ENCODE measurements at regions of chr1 and their contacts with region 1.

Region 1: DNA sequence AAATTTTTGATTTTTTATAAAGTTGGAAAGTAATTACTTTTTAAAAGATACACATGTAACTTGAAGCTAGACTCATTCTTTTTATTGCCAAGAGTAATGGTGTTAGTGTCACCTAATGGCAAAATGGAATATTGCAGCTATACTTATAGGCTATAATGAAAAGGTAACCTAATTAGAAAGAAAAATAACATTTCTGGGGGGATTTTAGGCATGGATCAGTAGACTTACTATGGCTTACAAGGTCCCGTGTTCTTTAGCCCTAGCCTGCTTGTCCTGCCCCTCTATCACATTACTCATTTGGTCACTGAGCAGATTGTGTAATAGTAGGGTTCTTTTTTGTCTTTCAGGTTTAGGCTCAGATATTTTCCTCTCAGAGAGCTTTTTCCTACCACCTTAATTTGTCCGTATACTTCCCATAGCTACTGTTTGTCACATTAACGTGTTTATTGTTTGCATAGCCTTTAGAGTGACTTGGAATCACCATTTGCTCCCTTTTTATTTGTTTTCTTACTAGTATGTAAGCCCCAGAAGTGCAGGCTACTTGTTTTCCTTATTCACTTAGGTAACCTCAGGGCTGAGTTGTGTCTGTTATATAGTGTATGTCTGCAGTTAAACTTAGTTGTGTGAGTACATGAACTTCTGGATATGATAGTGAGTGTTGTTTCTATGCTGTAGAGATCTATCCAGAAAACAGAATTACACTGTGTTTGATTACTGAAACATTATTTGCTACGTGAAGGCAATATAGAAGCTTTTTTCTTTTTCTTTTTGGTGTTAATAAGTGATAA is 58.7 kb downstream of the RABGAP1L start:
- DNase-seq: peak; percentile 17
- ATAC-seq: peak; percentile 79; the same call in 1 of the 2 replicates
- H3K4me3 ChIP-seq: no peak overlapping the region
- H3K27ac ChIP-seq: peak overlapping the region; percentile 62; the same call in 1 of the 2 replicates
- H3K4me1 ChIP-seq: peaks cover 13% of the 10 kb centered on the region
- H3K27me3 ChIP-seq: no peaks in the 10 kb centered on the region
- CTCF ChIP-seq: peak; percentile 77; the same call in 1 of the 2 replicates

Region 2: GRCh38 chr1:173970252-173970651 is 247.7 kb before region 1 on chr1:
- CTCF ChIA-PET with region 1: no interaction called
- POLR2A ChIA-PET with region 1: no interaction called
- in situ Hi-C with region 1: no loop called
- intact Hi-C with region 1: loop called (anchors 10 kb)
- DNase-seq: no peak
- ATAC-seq: no peak
- H3K4me3 ChIP-seq: no peak overlapping the region
- H3K27ac ChIP-seq: no peak overlapping the region
- H3K4me1 ChIP-seq: no peaks in the 10 kb centered on the region
- H3K27me3 ChIP-seq: no peaks in the 10 kb centered on the region
- CTCF ChIP-seq: no peak

Region 3: GRCh38 chr1:174097426-174097825 is 120.6 kb before region 1 on chr1:
- CTCF ChIA-PET with region 1: interaction called, 5 read pairs
- POLR2A ChIA-PET with region 1: no interaction called
- in situ Hi-C with region 1: no loop called
- intact Hi-C with region 1: loop called (anchors 5 kb)
- DNase-seq: no peak
- ATAC-seq: no peak
- H3K4me3 ChIP-seq: no peak overlapping the region
- H3K27ac ChIP-seq: no peak overlapping the region
- H3K4me1 ChIP-seq: no peaks in the 10 kb centered on the region
- H3K27me3 ChIP-seq: no peaks in the 10 kb centered on the region; the same call in 1 of the 2 replicates
- CTCF ChIP-seq: no peak

Measured in Panc1 (cell line).